ENCODE measurements at regions of chr6 and their contacts with region 1.

Region 1: DNA sequence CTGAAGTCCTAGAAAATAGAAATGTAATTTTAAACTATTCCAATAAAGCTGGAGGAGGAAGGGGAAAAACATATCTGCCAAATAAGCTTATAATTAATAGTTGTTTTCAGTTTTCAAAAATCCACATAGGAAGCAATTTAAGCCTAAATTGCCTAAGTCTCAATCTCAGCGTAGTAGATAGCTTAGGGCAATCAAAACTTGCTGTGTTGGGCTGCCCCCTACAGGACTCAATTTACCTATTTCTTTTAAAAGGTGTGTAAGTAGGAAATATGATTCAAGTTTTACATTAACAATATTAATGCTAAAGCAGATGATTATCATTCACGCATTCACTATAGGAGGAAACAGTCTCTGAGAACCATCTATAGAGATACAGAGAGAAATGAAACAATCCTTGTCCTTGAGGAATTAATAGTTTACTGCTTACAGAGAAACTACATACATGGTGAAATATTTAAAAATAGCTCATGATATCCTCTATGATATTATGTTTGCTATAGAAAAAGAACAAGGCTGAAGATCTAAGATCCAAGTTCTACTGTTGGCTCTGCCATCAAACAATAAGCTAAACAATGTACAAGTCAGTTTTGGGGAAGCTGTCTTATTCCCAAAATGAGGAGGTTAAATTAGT is 102.1 kb downstream of the ATG5 start:
- DNase-seq: peak; percentile 22 to 87 (median 68)
- ATAC-seq: peak; percentile 62 to 84 (median 69)
- H3K4me3 ChIP-seq: no peak overlapping the region
- H3K4me3 Mint-ChIP-seq: no peak overlapping the region
- H3K27ac ChIP-seq: no peak overlapping the region
- H3K27ac Mint-ChIP-seq: no peak overlapping the region
- H3K4me1 ChIP-seq: no peaks in the 10 kb centered on the region
- H3K4me1 Mint-ChIP-seq: peaks cover 24 to 30% (median 28%) of the 10 kb centered on the region in 3 donors
- H3K27me3 ChIP-seq: no peaks in the 10 kb centered on the region
- H3K27me3 Mint-ChIP-seq: no peaks in the 10 kb centered on the region

Region 2: GRCh38 chr6:105484238-105485161 is 738.9 kb before region 1 on chr6:
- CTCF ChIA-PET with region 1: interaction called, 7 to 35 read pairs
- POLR2A ChIA-PET with region 1: no interaction called
- DNase-seq: peak in 2 of 35 experiments; percentile 8 to 61
- ATAC-seq: peak in 1 of 4 experiments; percentile 55
- H3K4me3 ChIP-seq: peak overlapping the region in 1 of 2 donors; percentile 5
- H3K4me3 Mint-ChIP-seq: peak overlapping the region in 1 of 3 donors; percentile 18
- H3K27ac ChIP-seq: peak overlapping the region; percentile 66
- H3K27ac Mint-ChIP-seq: peak overlapping the region in 1 of 2 donors; percentile 12
- H3K4me1 ChIP-seq: peaks cover 0 to 3% of the 10 kb centered on the region in 2 experiments
- H3K4me1 Mint-ChIP-seq: peaks cover 14 to 34% (median 19%) of the 10 kb centered on the region in 3 donors
- H3K27me3 ChIP-seq: no peaks in the 10 kb centered on the region
- H3K27me3 Mint-ChIP-seq: peaks cover 1 to 6% of the 10 kb centered on the region in 2 donors

Region 3: DNA sequence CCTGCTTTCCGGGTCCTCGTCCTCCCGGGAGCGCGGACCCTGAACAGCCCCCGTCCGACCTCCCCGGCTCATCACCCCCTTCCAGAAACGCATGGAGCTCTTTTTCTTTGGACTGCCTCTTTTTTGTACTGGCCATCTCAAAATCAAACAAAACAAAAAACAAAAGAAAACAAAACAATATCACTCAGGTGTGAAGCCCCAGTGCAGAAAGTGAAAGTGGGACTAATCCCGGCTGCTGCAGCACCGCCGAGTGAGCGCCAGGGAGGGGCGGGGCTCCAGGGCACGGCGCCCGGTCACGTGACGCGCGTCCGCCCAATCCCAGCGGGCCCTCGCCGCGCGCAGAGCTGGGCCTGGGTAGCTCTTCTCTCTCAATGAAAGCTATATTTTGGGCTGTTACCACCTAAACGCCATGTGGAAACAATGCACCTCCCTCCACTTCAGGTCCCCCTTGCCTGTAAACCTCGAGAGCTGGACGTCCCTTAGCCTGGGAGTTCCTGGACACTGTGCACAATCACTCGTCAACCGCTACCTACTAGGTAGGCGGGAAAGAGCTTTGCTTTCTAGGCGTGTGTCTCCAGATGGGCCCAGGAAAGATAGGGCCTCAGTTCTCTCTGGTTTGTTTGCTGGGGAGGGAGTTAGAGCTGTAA is 231.0 kb before region 1 on chr6:
- CTCF ChIA-PET with region 1: interaction called, 15 to 55 read pairs
- POLR2A ChIA-PET with region 1: interaction called in 1 of 2 experiments, 4 read pairs
- DNase-seq: peak; percentile 74 to 95 (median 85)
- ATAC-seq: peak; percentile 90 to 92 (median 92)
- H3K4me3 ChIP-seq: peak overlapping the region; percentile 85 to 96
- H3K4me3 Mint-ChIP-seq: peak overlapping the region; percentile 90 to 95 (median 94)
- H3K27ac ChIP-seq: peak overlapping the region; percentile 88
- H3K27ac Mint-ChIP-seq: peak overlapping the region; percentile 95 to 96
- H3K4me1 ChIP-seq: peaks cover 18 to 35% of the 10 kb centered on the region in 2 experiments
- H3K4me1 Mint-ChIP-seq: peaks cover 29 to 42% (median 42%) of the 10 kb centered on the region in 3 donors
- H3K27me3 ChIP-seq: peaks cover 27 to 30% of the 10 kb centered on the region in 2 experiments
- H3K27me3 Mint-ChIP-seq: peaks cover 47 to 52% of the 10 kb centered on the region in 2 donors

Region 4: GRCh38 chr6:106097411-106098231 is 125.8 kb before region 1 on chr6:
- CTCF ChIA-PET with region 1: interaction called, 11 to 23 read pairs
- POLR2A ChIA-PET with region 1: interaction called in 1 of 2 experiments, 3 read pairs
- DNase-seq: peak in 33 of 35 experiments; percentile 16 to 89 (median 63)
- ATAC-seq: peak; percentile 74 to 80 (median 76)
- H3K4me3 ChIP-seq: peak overlapping the region; percentile 74 to 75
- H3K4me3 Mint-ChIP-seq: peak overlapping the region; percentile 88 to 93 (median 88)
- H3K27ac ChIP-seq: peak overlapping the region; percentile 85
- H3K27ac Mint-ChIP-seq: peak overlapping the region; percentile 96 to 98
- H3K4me1 ChIP-seq: peaks cover 23 to 31% of the 10 kb centered on the region in 2 experiments
- H3K4me1 Mint-ChIP-seq: peaks cover 91 to 93% (median 93%) of the 10 kb centered on the region in 3 donors
- H3K27me3 ChIP-seq: no peaks in the 10 kb centered on the region
- H3K27me3 Mint-ChIP-seq: no peaks in the 10 kb centered on the region

Region 5: GRCh38 chr6:106181664-106182418 is 41.6 kb before region 1 on chr6:
- CTCF ChIA-PET with region 1: interaction called, 6 to 12 read pairs
- POLR2A ChIA-PET with region 1: no interaction called
- DNase-seq: no peak
- ATAC-seq: no peak
- H3K4me3 ChIP-seq: no peak overlapping the region
- H3K4me3 Mint-ChIP-seq: no peak overlapping the region
- H3K27ac ChIP-seq: no peak overlapping the region
- H3K27ac Mint-ChIP-seq: no peak overlapping the region
- H3K4me1 ChIP-seq: peaks cover 7 to 24% of the 10 kb centered on the region in 2 experiments
- H3K4me1 Mint-ChIP-seq: peaks cover 13 to 45% (median 29%) of the 10 kb centered on the region in 3 donors
- H3K27me3 ChIP-seq: no peaks in the 10 kb centered on the region
- H3K27me3 Mint-ChIP-seq: no peaks in the 10 kb centered on the region

Region 6: DNA sequence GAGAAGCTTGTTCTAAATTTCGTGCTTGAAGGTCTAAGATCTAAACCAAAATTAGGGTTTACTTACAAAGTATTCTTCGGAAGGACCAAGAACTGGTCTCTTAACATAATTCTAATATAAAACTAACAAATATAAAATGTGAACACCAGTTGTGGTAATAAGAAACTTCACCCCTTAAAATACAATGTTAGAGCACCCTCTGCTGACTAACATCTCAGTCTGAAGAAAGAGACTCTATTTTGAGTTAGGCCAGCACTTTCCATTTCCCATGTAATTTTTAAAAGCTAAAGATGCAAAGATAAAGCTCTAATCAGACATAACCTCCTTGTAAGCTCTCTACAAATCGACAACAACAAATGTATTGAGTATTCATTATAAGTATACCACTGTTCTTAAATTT is 77.5 kb after region 1 on chr6:
- CTCF ChIA-PET with region 1: interaction called in 1 of 2 experiments, 13 read pairs
- POLR2A ChIA-PET with region 1: interaction called in 1 of 2 experiments, 3 read pairs
- DNase-seq: peak in 1 of 35 experiments; percentile 54
- ATAC-seq: no peak
- H3K4me3 ChIP-seq: no peak overlapping the region
- H3K4me3 Mint-ChIP-seq: no peak overlapping the region
- H3K27ac ChIP-seq: no peak overlapping the region
- H3K27ac Mint-ChIP-seq: no peak overlapping the region
- H3K4me1 ChIP-seq: peaks cover 0 to 3% of the 10 kb centered on the region in 2 experiments
- H3K4me1 Mint-ChIP-seq: peaks cover 6 to 20% (median 14%) of the 10 kb centered on the region in 3 donors
- H3K27me3 ChIP-seq: no peaks in the 10 kb centered on the region
- H3K27me3 Mint-ChIP-seq: no peaks in the 10 kb centered on the region